Endothelial cell of umbilical vein (primary cell): ENCODE measurements at regions of chr5 and their contacts with region 1.

Region 1: DNA sequence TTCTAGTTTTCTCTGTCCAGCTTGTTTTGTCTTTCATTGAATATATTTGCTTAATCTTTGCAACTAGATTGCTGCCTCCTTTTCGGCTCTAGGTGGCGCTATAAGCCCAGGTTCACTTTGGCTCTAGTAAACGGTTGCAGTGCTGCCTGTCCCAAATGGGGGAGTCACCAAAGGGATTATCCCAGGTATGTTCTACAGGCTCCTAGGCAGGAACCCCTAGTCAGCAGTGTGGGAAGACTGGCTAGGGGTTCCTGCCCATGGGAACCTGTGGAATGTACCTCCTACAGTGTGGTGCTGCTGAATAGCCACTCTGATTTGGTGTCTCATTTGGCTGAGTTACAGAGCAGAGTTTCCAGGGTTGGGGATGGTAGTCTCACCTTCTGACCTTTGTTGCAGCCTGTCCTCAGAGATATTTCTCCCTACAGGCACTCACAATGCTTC is 85.2 kb downstream of the ARSB start:
- DNase-seq: peak; percentile 69
- H3K4me3 ChIP-seq: no peak overlapping the region
- H3K27ac ChIP-seq: no peak overlapping the region
- H3K4me1 ChIP-seq: no peaks in the 10 kb centered on the region
- H3K27me3 ChIP-seq: no peaks in the 10 kb centered on the region
- CTCF ChIP-seq: peak; percentile 78 to 82
- POLR2A ChIP-seq: no peak

Region 2: DNA sequence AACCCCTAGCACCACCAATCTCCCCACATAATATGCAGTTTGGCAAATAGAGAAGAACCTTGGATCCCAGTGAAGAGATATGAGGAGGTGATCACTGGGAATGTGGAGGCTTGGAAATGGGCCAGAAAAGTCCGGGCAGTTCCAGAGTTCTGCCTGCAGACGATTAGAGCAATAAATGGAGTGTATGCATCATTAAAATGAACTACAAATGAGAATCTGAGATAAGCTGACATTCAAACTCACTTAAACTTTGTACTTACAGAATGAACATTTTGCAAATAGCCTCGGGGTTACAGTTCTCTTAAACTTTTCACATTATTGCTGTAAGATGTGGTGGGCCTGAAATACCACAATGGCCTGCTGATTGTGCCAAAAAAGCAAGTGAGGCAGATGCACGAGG is 228.3 kb before region 1 on chr5:
- CTCF ChIA-PET with region 1: no interaction called
- POLR2A ChIA-PET with region 1: no interaction called
- dilution Hi-C with region 1: no loop called
- intact Hi-C with region 1: no loop called
- DNase-seq: no peak
- H3K4me3 ChIP-seq: no peak overlapping the region
- H3K27ac ChIP-seq: no peak overlapping the region
- H3K4me1 ChIP-seq: no peaks in the 10 kb centered on the region
- H3K27me3 ChIP-seq: peaks cover 0 to 2% of the 10 kb centered on the region in 2 experiments
- CTCF ChIP-seq: no peak
- POLR2A ChIP-seq: no peak

Region 3: GRCh38 chr5:78879516-78879915 is 20.4 kb before region 1 on chr5:
- CTCF ChIA-PET with region 1: interaction called, 38 read pairs
- POLR2A ChIA-PET with region 1: no interaction called
- dilution Hi-C with region 1: no loop called
- intact Hi-C with region 1: no loop called
- DNase-seq: no peak
- H3K4me3 ChIP-seq: no peak overlapping the region
- H3K27ac ChIP-seq: no peak overlapping the region
- H3K4me1 ChIP-seq: no peaks in the 10 kb centered on the region
- H3K27me3 ChIP-seq: no peaks in the 10 kb centered on the region
- CTCF ChIP-seq: no peak
- POLR2A ChIP-seq: no peak

Region 4: GRCh38 chr5:78920604-78921003 is 20.7 kb after region 1 on chr5:
- CTCF ChIA-PET with region 1: interaction called, 23 read pairs
- POLR2A ChIA-PET with region 1: no interaction called
- dilution Hi-C with region 1: no loop called
- intact Hi-C with region 1: no loop called
- DNase-seq: no peak
- H3K4me3 ChIP-seq: no peak overlapping the region
- H3K27ac ChIP-seq: no peak overlapping the region
- H3K4me1 ChIP-seq: no peaks in the 10 kb centered on the region
- H3K27me3 ChIP-seq: no peaks in the 10 kb centered on the region
- CTCF ChIP-seq: peak in 1 of 2 donors; percentile 13
- POLR2A ChIP-seq: no peak

Region 5: GRCh38 chr5:78953092-78953800 is 53.3 kb after region 1 on chr5:
- CTCF ChIA-PET with region 1: interaction called, 14 read pairs
- POLR2A ChIA-PET with region 1: no interaction called
- dilution Hi-C with region 1: no loop called
- intact Hi-C with region 1: no loop called
- DNase-seq: no peak
- H3K4me3 ChIP-seq: no peak overlapping the region
- H3K27ac ChIP-seq: no peak overlapping the region
- H3K4me1 ChIP-seq: no peaks in the 10 kb centered on the region
- H3K27me3 ChIP-seq: no peaks in the 10 kb centered on the region
- CTCF ChIP-seq: no peak
- POLR2A ChIP-seq: no peak

Region 6: GRCh38 chr5:78972654-78973428 is 72.9 kb after region 1 on chr5:
- CTCF ChIA-PET with region 1: interaction called, 133 read pairs
- POLR2A ChIA-PET with region 1: no interaction called
- dilution Hi-C with region 1: no loop called
- intact Hi-C with region 1: no loop called
- DNase-seq: peak; percentile 99
- H3K4me3 ChIP-seq: peak overlapping the region in 1 of 3 experiments; percentile 15
- H3K27ac ChIP-seq: peak overlapping the region; percentile 4
- H3K4me1 ChIP-seq: peaks cover 12% of the 10 kb centered on the region
- H3K27me3 ChIP-seq: no peaks in the 10 kb centered on the region
- CTCF ChIP-seq: no peak
- POLR2A ChIP-seq: no peak

Region 7: GRCh38 chr5:79011219-79011836 is 111.4 kb after region 1 on chr5:
- CTCF ChIA-PET with region 1: interaction called, 11 read pairs
- POLR2A ChIA-PET with region 1: no interaction called
- dilution Hi-C with region 1: no loop called
- intact Hi-C with region 1: no loop called
- DNase-seq: no peak
- H3K4me3 ChIP-seq: no peak overlapping the region
- H3K27ac ChIP-seq: no peak overlapping the region
- H3K4me1 ChIP-seq: no peaks in the 10 kb centered on the region
- H3K27me3 ChIP-seq: peaks cover 18 to 28% of the 10 kb centered on the region in 2 experiments
- CTCF ChIP-seq: no peak
- POLR2A ChIP-seq: no peak